OCI-LY7 (cell line): ENCODE measurements at regions of chr12 and their contacts with region 1.

Region 1: DNA sequence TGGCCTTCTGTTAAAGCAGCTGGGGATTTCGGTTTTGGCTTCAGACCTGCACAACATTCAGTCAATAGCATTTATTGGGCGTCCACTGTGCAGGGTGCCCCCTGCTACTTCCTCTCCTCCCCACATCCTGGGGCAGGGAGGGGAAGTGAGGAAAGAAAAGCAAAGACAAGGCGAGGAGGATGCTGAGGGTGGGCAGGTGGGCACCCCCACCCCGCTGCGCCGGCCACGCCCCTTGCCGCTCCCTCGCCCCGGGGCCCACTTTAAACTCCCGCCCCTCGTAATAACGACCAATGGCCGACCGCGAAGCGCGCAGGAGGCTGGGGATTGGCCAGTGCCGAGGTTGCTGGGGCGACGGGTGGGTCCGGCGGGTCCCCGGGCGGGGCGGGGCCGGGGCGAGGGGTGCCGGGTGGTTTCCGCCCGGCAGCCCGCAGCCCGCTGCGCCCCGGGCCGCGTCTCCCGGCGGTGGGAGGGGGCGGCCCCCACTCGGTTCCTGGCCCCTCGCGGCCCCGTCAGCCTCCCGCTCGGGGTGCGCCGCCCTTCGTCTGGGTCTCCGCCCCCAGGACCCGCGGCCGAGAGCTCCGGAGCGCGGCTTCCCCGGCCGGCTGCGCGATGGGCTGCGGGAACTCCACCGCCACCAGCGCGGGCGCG is at the start of gene C12orf75:
- DNase-seq: peak; percentile 95
- H3K4me3 ChIP-seq: peak within 1 kb of the TSS; percentile 92
- H3K27ac ChIP-seq: peak within 1 kb of the TSS; percentile 91
- H3K4me1 ChIP-seq: peaks cover 78% of the 10 kb centered on the region
- CTCF ChIP-seq: no peak
- total RNA-seq, gene C12orf75: 147 and 174 TPM in 2 replicates

Region 2: GRCh38 chr12:104478396-104479122 is 851.8 kb before region 1 on chr12:
- CTCF ChIA-PET with region 1: no interaction called
- POLR2A ChIA-PET with region 1: no interaction called
- intact Hi-C with region 1: loop called (anchors 10 kb)
- DNase-seq: peak; percentile 90
- H3K4me3 ChIP-seq: peak overlapping the region; percentile 61
- H3K27ac ChIP-seq: peak overlapping the region; percentile 87
- H3K4me1 ChIP-seq: peaks cover 88% of the 10 kb centered on the region
- CTCF ChIP-seq: no peak

Region 3: GRCh38 chr12:105235732-105236476 is 94.5 kb before region 1 on chr12 and contains the start of gene APPL2:
- CTCF ChIA-PET with region 1: no interaction called
- POLR2A ChIA-PET with region 1: interaction called, 7 read pairs
- intact Hi-C with region 1: loop called (anchors 5 kb)
- DNase-seq: peak; percentile 93
- H3K4me3 ChIP-seq: peak within 1 kb of the TSS; percentile 80
- H3K27ac ChIP-seq: peak within 1 kb of the TSS; percentile 42
- H3K4me1 ChIP-seq: peaks cover 39% of the 10 kb centered on the region
- CTCF ChIP-seq: peak; percentile 67
- total RNA-seq, gene APPL2: 18.8 and 20.9 TPM in 2 replicates

Region 4: DNA sequence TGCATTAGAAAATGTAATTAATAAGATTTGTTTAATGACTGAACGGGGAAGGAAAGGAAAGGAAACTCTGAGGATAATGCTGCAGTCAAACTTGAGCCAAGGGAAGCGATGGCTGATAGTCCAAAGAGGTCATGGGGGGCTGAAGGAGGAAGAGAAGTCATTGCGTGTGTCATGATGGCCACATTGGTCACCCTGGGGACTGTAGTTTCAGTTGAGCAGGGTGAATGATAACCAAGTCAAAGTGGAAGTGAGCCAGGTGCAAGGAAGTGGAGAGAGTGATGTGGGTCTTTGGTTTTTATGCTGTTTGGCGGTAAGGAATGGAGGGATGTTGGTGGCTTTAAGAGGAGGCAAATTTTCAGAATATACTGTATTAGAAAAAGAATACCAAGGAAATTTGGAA is 21.6 kb after region 1 on chr12:
- CTCF ChIA-PET with region 1: interaction called, 5 read pairs
- POLR2A ChIA-PET with region 1: interaction called, 157 read pairs
- intact Hi-C with region 1: loop called (anchors 1 kb)
- DNase-seq: peak; percentile 82
- H3K4me3 ChIP-seq: peak overlapping the region; percentile 37
- H3K27ac ChIP-seq: peak overlapping the region; percentile 74
- H3K4me1 ChIP-seq: peaks cover 93% of the 10 kb centered on the region
- CTCF ChIP-seq: no peak

Region 5: GRCh38 chr12:105365231-105365630 is 34.8 kb after region 1 on chr12:
- CTCF ChIA-PET with region 1: no interaction called
- POLR2A ChIA-PET with region 1: interaction called, 39 read pairs
- intact Hi-C with region 1: no loop called
- DNase-seq: no peak
- H3K4me3 ChIP-seq: no peak overlapping the region
- H3K27ac ChIP-seq: no peak overlapping the region
- H3K4me1 ChIP-seq: peaks cover 27% of the 10 kb centered on the region
- CTCF ChIP-seq: no peak